Activated CD8-positive, alpha-beta T cell treated with anti-CD3 and anti-CD28 coated beads, Interleukin-2, amount 10 ng/mL, durations not matched to agents 7 days and 5 days (primary cell): ENCODE measurements at regions of chr10 and their contacts with region 1.

Region 1: GRCh38 chr10:103781329-103782061 is 73.9 kb downstream of the SH3PXD2A start:
- DNase-seq: no peak
- ATAC-seq: peak; percentile 37
- H3K4me3 Mint-ChIP-seq: no peak overlapping the region
- H3K27ac Mint-ChIP-seq: peak overlapping the region; percentile 22
- H3K4me1 Mint-ChIP-seq: peaks cover 14% of the 10 kb centered on the region
- H3K27me3 Mint-ChIP-seq: peaks cover 28% of the 10 kb centered on the region

Region 2: GRCh38 chr10:103699611-103700435 is 81.7 kb before region 1 on chr10:
- CTCF ChIA-PET with region 1: no interaction called
- POLR2A ChIA-PET with region 1: no interaction called
- DNase-seq: no peak
- ATAC-seq: no peak
- H3K4me3 Mint-ChIP-seq: no peak overlapping the region
- H3K27ac Mint-ChIP-seq: no peak overlapping the region
- H3K4me1 Mint-ChIP-seq: peaks cover 31% of the 10 kb centered on the region
- H3K27me3 Mint-ChIP-seq: no peaks in the 10 kb centered on the region

Region 3: DNA sequence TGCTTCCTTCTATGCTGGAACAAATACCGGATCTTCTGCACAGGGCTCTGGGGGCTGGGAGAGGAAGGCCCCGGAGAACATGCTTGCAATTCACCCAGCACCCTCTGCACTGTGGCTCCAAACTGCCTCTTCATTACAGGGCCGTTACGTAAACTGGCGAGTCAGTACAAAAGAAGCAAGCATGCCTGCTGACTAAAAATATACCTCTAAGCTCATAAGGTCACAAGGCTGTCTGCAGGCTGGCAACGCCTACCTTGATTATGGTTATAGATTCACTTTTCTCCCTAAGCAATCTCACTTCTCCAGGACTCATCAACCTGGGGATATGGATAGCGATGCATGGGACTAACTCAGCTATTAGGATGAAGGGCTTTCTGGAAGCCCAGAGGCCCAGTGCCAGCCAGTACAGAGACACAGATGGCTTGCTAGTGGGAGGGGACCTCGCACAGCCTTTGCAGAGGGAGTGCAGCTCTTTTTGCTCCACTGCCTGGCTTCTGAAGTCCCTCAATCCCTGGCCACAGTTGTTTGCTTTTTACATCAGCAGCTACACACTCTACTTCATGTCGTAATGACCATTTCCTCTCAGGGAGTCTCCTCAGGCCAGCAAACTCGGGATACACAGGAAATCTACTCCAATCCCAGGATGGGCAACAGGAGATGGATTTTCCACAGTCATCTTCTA is 22.3 kb before region 1 on chr10:
- CTCF ChIA-PET with region 1: interaction called, 18 read pairs
- POLR2A ChIA-PET with region 1: no interaction called
- DNase-seq: no peak
- ATAC-seq: no peak
- H3K4me3 Mint-ChIP-seq: no peak overlapping the region
- H3K27ac Mint-ChIP-seq: peak overlapping the region; percentile 30
- H3K4me1 Mint-ChIP-seq: peaks cover 53% of the 10 kb centered on the region
- H3K27me3 Mint-ChIP-seq: peaks cover 18% of the 10 kb centered on the region